Activated CD4-positive, alpha-beta memory T cell treated with anti-CD3 and anti-CD28 coated beads for 36 hours (primary cell): ENCODE measurements at regions of chr5 and their contacts with region 1.

Region 1: DNA sequence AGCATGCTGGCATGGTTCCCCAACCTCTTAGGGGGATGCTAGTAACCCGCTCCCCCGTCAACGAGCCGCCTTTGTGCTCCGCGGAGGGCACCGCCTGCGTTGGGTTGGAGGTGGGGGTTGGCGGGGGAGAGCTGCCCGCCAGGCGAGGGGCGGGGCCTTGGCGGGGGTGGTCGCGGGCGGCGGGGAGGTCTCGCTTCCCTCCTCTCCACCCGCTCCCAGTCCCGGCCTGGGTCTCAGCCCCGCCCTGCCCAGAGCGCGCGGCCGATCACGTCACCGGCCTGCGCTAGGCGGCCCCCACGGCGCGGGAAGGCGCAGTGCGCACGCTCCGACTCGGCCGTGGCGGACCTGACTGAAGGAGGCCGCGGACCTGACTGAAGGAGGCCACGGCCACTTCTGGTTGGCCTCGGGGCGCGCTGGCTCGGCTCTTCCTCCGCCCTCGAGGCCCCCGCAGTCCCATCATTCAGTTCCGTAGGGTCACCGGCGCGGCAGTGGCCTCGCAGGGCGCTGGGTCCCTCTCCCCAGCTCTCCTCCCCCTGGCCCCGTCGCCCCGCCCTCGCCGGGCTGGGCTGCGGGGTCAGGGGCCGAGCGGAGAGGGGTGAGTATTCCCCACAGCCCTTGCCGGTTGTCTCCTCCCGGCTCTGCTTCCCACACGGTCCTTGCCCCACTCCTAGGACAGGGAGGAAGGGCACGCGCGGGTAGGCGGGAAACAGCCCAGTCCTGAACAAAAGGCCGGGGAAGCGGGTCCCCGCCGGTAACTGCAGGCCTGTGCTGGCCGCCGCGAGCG is at the start of gene ATG10:
- DNase-seq: peak; percentile 91
- H3K4me3 Mint-ChIP-seq: peak within 1 kb of the TSS; percentile 87
- H3K27ac Mint-ChIP-seq: peak within 1 kb of the TSS; percentile 98
- H3K4me1 Mint-ChIP-seq: peaks cover 20% of the 10 kb centered on the region
- H3K27me3 Mint-ChIP-seq: no peaks in the 10 kb centered on the region
- total RNA-seq, gene ATG10: 8.5 to 9.7 TPM

Region 2: DNA sequence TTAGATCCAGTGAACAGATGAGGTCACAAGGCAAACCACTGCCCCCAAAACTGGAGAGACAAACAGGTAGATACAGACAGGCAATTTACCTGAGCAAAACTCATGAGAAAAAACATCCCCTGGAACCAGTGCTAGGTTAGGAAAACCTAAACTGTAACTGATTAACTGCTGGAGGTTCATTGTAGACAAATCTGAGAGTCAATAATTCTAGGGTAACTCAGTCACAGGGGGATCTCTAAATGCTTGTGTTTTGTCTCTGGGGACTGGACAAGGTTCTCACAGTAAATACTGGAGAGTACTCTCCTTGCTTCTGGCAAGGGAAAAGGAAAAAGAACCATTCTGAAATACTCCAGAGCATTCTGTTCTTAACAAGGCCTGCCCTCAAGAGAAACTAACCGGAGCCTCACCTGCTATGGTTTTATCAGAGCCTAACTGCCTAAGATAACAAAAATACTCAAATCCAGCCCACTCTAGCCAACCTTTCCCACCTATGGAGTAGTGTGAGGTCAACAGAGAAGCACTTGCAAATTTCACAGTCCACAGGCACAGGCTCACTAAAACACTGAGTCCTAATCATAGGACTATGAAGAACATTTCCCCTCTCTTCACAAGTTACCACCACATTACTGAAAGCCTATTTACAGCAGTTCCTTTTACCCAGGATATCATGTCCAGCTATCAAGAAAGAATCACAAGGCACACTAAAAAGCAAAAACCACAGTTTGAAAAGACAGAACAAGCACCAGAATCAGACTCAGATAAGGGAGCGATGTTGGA is 438.1 kb before region 1 on chr5:
- CTCF ChIA-PET with region 1: no interaction called
- POLR2A ChIA-PET with region 1: no interaction called
- intact Hi-C with region 1: loop called (anchors 10 kb)
- DNase-seq: no peak
- H3K4me3 Mint-ChIP-seq: no peak overlapping the region
- H3K27ac Mint-ChIP-seq: no peak overlapping the region
- H3K4me1 Mint-ChIP-seq: peaks cover 32% of the 10 kb centered on the region
- H3K27me3 Mint-ChIP-seq: no peaks in the 10 kb centered on the region

Region 3: GRCh38 chr5:82174128-82174918 is 202.4 kb after region 1 on chr5:
- CTCF ChIA-PET with region 1: interaction called, 4 read pairs
- POLR2A ChIA-PET with region 1: no interaction called
- intact Hi-C with region 1: loop called (anchors 2 kb)
- DNase-seq: peak; percentile 76
- H3K4me3 Mint-ChIP-seq: no peak overlapping the region
- H3K27ac Mint-ChIP-seq: no peak overlapping the region
- H3K4me1 Mint-ChIP-seq: peaks cover 11% of the 10 kb centered on the region
- H3K27me3 Mint-ChIP-seq: no peaks in the 10 kb centered on the region

Region 4: GRCh38 chr5:82278095-82278918 is 306.4 kb after region 1 on chr5 and contains the start of gene RPS23:
- CTCF ChIA-PET with region 1: no interaction called
- POLR2A ChIA-PET with region 1: interaction called, 3 read pairs
- intact Hi-C with region 1: loop called (anchors 1 kb)
- DNase-seq: peak; percentile 92
- H3K4me3 Mint-ChIP-seq: peak within 1 kb of the TSS; percentile 86
- H3K27ac Mint-ChIP-seq: peak within 1 kb of the TSS; percentile 97
- H3K4me1 Mint-ChIP-seq: peaks cover 50% of the 10 kb centered on the region
- H3K27me3 Mint-ChIP-seq: no peaks in the 10 kb centered on the region
- total RNA-seq, gene RPS23: 2,621 to 2,722 TPM